GM18951 (cell line): ENCODE measurements at regions of chr3 and their contacts with region 1.

Region 1: DNA sequence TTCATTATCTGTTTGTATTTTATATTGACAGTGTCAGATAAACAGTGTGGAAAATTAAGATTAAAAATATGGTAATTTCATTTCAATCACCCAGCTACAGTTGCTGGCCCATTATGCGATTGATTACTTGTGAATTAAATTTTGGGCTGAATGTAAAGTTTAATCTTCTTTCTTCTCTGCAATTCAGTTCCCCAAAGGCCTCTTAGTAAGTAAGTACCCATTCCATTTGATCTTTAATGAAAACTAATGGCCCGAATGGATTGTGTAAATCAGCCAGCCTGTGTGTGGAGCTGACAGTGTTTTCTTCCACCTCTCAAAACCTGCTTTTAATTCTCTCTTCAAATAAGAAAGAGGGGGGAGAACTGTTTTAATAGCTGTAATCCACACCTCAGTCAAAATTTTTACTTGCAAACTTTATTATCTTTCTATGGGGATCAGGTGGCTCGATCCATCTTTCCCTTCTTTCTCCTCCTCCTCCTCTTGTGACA is 307.1 kb downstream of the IL20RB start:
- POLR2A ChIP-seq: no peak

Region 2: GRCh38 chr3:136632625-136633081 is 632.2 kb before region 1 on chr3:
- in situ Hi-C with region 1: no loop called
- POLR2A ChIP-seq: no peak

Region 3: GRCh38 chr3:136671921-136672320 is 593.0 kb before region 1 on chr3:
- in situ Hi-C with region 1: loop called (anchors 10 kb)
- POLR2A ChIP-seq: no peak

Region 4: GRCh38 chr3:137477614-137478013 is 212.7 kb after region 1 on chr3:
- in situ Hi-C with region 1: no loop called
- POLR2A ChIP-seq: no peak